Activated B cell treated with CpG ODN at 0.5 μM for 24 hours (primary cell): ENCODE measurements at regions of chr6 and their contacts with region 1.

Region 1: GRCh38 chr6:37698261-37699137 is 816 bp upstream of the MDGA1 start:
- DNase-seq: peak; percentile 58
- ATAC-seq: peak; percentile 41
- H3K4me3 Mint-ChIP-seq: peak overlapping the region; percentile 97
- H3K27ac Mint-ChIP-seq: peak overlapping the region; percentile 93
- H3K4me1 Mint-ChIP-seq: peaks cover 19% of the 10 kb centered on the region
- H3K27me3 Mint-ChIP-seq: peaks cover 15% of the 10 kb centered on the region
- CTCF ChIP-seq: no peak

Region 2: DNA sequence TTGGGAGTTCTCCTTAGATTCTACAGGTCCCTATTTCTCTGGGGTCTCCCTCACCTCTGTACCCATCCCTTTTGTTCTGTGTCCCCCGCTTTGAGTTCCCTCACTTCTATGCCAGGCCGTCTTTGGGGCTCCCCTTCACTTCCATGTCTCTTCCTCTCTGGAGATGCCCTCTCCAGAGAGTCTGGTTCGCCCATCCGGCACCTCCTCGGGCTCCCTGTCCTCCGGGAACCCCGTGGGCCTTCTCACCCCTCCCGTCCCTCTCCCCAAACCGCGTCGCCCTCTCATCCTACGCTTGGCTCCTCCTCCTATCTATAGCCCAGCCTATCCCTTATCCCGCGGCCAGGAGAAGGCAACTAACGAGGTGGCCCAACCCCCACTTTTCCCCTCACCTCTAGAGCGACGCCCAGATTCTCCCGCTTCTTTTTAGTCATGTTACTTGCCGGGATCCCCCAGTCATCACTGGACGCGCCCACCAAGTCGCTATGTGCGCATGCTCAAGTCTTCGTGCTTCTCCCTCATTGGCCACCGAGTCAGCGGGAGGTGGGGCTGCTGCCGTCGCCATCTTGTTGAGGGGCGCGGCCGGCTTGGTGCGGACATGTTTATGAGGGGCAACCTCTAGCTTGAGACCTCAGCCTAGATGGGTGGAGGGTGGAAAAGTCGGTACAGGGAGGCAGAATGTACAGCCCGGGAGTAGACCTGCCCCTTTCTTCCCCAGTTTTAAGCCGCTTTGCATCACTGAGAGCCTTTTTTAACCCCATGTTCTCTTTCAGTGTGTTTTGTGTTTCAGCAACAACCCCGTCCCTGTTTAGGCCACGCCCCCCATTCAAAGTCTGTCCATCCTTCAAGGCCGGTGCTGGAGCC is 198.8 kb before region 1 on chr6 and contains the start of gene CCDC167:
- CTCF ChIA-PET with region 1: no interaction called
- POLR2A ChIA-PET with region 1: interaction called, 5 read pairs
- intact Hi-C with region 1: loop called (anchors 5 kb)
- DNase-seq: peak; percentile 86
- ATAC-seq: peak; percentile 96
- H3K4me3 Mint-ChIP-seq: peak within 1 kb of the TSS; percentile 96
- H3K27ac Mint-ChIP-seq: peak within 1 kb of the TSS; percentile 82
- H3K4me1 Mint-ChIP-seq: peaks cover 65% of the 10 kb centered on the region
- H3K27me3 Mint-ChIP-seq: no peaks in the 10 kb centered on the region
- CTCF ChIP-seq: no peak
- total RNA-seq, gene CCDC167: 18.4 and 25.9 TPM in 2 replicates

Region 3: GRCh38 chr6:37679539-37680476 is 18.7 kb before region 1 on chr6:
- CTCF ChIA-PET with region 1: no interaction called
- POLR2A ChIA-PET with region 1: no interaction called
- intact Hi-C with region 1: loop called (anchors 2 kb)
- DNase-seq: peak; percentile 62
- ATAC-seq: peak; percentile 90
- H3K4me3 Mint-ChIP-seq: peak overlapping the region; percentile 75
- H3K27ac Mint-ChIP-seq: peak overlapping the region; percentile 86
- H3K4me1 Mint-ChIP-seq: peaks cover 56% of the 10 kb centered on the region
- H3K27me3 Mint-ChIP-seq: no peaks in the 10 kb centered on the region
- CTCF ChIP-seq: no peak

Region 4: GRCh38 chr6:39114704-39115599 is 1416.5 kb after region 1 on chr6 and contains the start of gene SAYSD1:
- CTCF ChIA-PET with region 1: no interaction called
- POLR2A ChIA-PET with region 1: no interaction called
- intact Hi-C with region 1: loop called (anchors 5 kb)
- DNase-seq: peak; percentile 93
- ATAC-seq: peak; percentile 89
- H3K4me3 Mint-ChIP-seq: peak within 1 kb of the TSS; percentile 94
- H3K27ac Mint-ChIP-seq: peak within 1 kb of the TSS; percentile 94
- H3K4me1 Mint-ChIP-seq: peaks cover 35% of the 10 kb centered on the region
- H3K27me3 Mint-ChIP-seq: no peaks in the 10 kb centered on the region
- CTCF ChIP-seq: no peak
- total RNA-seq, gene SAYSD1: 9.6 and 9.7 TPM in 2 replicates